ENCODE measurements at regions of chr5 and their contacts with region 1.

Region 1: DNA sequence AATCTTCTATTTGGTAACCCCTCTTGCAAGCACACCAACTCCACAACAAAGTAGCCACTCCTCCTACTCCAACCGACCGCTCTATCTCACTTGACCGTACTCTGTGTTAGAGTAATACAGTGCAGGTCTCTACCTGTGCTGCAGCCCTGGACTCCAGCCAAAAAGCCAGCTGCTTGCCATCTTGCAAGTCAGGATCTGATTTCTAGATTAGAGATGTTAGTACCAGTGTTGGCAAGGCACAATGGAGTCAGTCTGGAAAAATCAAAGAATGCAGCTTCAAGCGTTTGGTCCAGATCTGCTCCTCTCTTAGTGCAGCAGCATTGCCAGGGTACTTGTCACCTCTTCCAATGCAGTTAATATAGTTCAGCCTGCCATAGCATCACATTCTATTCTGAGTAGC is 477.6 kb downstream of the ZSWIM6 start:
- DNase-seq: no peak
- ATAC-seq: no peak
- H3K4me3 ChIP-seq: no peak overlapping the region
- H3K27ac ChIP-seq: no peak overlapping the region
- H3K4me1 ChIP-seq: no peaks in the 10 kb centered on the region
- H3K27me3 ChIP-seq: peaks cover 7% of the 10 kb centered on the region
- CTCF ChIP-seq: no peak

Region 2: DNA sequence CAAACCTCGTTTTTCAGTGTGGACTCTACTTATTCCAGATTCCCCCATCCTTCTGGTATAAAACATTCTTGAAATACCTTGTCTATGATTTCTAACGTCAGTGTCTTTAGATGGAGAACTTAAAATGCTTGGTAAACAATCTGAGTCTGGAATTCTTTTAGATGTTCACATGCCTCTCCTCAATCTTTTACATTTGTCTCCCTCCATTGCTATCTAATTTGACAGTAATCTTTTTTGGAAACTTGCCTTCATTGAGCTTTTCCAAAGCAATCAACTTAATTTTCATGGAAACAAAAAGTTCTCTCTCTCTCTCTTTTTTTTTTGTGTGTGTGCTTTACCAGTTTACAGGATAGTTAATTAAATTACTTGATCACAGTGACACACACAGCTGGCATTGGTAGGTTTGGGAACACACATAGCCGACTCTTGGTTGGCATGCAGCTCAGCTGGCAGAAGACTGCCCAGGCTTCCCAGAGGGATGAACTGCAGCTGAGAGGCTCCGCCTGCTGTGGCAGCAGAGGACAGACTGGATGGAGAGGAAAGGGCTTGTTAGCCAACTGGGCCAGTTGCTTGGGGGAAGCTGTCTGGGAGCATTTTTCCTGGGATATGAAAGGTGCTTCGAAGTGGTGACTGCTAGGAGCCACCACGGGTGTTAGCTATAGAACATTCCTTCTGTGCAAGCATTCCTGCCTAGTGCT is 206.3 kb before region 1 on chr5:
- CTCF ChIA-PET with region 1: interaction called, 11 read pairs
- POLR2A ChIA-PET with region 1: no interaction called
- in situ Hi-C with region 1: no loop called
- intact Hi-C with region 1: no loop called
- DNase-seq: no peak
- ATAC-seq: no peak
- H3K4me3 ChIP-seq: no peak overlapping the region
- H3K27ac ChIP-seq: no peak overlapping the region
- H3K4me1 ChIP-seq: peaks cover 15% of the 10 kb centered on the region
- H3K27me3 ChIP-seq: no peaks in the 10 kb centered on the region
- CTCF ChIP-seq: no peak

Measured in Panc1 (cell line).